A673 (cell line): ENCODE measurements at regions of chr17 and their contacts with region 1.

Region 1: DNA sequence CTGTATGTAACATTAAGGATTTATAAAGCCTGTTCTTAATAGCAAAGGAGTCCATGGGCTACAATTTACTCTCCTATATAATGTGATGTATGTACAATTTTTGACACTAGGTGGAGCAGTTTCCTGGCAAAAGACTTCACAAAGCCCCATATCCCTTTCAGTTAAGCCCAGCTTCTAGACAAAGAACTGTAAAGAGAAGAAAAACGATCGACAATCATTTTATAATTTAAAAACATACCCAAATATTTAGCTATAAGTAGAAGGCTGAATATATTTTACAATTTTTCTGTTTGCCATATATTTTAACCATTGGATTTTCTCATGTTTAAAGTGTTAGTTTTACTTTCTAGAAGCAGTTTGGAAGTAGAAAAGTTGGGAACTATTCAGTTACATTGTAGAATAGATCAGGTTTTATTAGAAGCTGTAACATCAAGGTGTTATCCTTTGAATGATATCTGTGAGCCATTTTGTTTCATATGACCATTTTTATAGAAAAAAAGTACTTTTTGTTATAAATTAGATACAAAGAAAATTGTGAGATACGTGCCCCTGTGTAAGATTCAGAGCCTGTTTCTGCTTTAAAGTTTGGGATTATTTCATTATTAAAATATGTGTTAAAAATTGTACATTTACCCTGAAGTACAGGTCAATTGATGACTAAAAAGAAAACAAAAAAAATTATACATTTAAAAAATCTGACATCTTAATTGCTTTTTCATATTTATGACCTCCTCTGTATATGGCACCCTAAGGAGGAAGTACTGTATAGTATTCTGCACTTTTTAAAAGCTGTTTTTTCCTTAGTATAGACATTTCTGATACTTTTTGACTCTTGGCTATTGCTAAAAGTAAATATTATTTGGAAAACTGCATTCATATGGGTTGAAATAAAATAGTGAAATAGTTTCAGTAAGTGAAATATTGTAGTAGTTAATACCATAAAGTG is 46.3 kb downstream of the VMP1 start:
- DNase-seq: peak; percentile 92
- H3K4me3 ChIP-seq: no peak overlapping the region
- H3K27ac ChIP-seq: peak overlapping the region; percentile 72
- H3K4me1 ChIP-seq: peaks cover 26% of the 10 kb centered on the region
- H3K27me3 ChIP-seq: no peaks in the 10 kb centered on the region
- CTCF ChIP-seq: peak; percentile 79

Region 2: GRCh38 chr17:59804901-59805465 is 51.2 kb after region 1 on chr17:
- CTCF ChIA-PET with region 1: no interaction called
- POLR2A ChIA-PET with region 1: no interaction called
- intact Hi-C with region 1: no loop called
- DNase-seq: peak; percentile 87
- H3K4me3 ChIP-seq: peak overlapping the region; percentile 39
- H3K27ac ChIP-seq: peak overlapping the region; percentile 87
- H3K4me1 ChIP-seq: peaks cover 34% of the 10 kb centered on the region
- H3K27me3 ChIP-seq: no peaks in the 10 kb centered on the region
- CTCF ChIP-seq: no peak

Region 3: GRCh38 chr17:59829217-59830006 is 75.6 kb after region 1 on chr17:
- CTCF ChIA-PET with region 1: interaction called, 10 read pairs
- POLR2A ChIA-PET with region 1: no interaction called
- intact Hi-C with region 1: no loop called
- DNase-seq: peak; percentile 99
- H3K4me3 ChIP-seq: peak overlapping the region; percentile 27
- H3K27ac ChIP-seq: peak overlapping the region; percentile 97
- H3K4me1 ChIP-seq: peaks cover 75% of the 10 kb centered on the region
- H3K27me3 ChIP-seq: no peaks in the 10 kb centered on the region
- CTCF ChIP-seq: no peak

Region 4: DNA sequence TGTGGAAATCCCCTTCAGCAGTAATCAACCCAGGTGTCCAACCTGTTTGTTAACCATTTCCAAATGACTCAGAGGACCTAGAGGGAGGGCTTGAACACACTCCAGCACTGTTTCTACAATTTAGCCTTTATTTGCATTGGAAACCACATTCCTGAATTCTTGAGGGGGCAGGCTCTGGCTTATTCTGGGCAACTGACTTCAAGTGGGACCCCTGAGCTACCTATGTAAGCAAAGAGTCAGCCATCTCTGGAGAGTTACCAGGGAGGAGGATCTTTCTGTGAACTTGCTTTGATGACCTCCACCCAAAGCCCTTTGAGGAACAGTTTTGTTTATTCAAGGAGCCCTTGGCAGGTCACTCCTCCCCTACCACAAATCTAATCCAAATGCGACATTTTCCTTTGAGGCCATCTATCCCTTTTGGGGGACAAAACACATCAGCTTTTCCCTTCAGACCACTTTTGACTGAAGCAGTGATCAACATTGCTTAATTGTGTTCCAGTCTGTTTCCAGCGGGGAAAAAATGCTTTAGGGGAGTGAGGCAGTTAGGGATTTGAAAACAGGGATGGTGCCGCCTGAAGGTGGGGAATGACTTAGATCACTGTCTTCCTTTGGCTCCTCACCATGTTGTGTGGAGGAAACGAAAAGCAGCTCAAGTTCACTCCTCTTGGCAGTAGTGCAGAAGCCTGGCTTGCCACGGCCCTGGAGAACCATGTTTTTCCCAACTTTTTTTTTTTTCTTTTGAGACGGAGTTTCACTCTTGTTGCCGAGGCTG is 92.8 kb after region 1 on chr17:
- CTCF ChIA-PET with region 1: interaction called, 4 read pairs
- POLR2A ChIA-PET with region 1: interaction called, 15 read pairs
- intact Hi-C with region 1: no loop called
- DNase-seq: no peak
- H3K4me3 ChIP-seq: no peak overlapping the region
- H3K27ac ChIP-seq: no peak overlapping the region
- H3K4me1 ChIP-seq: peaks cover 10% of the 10 kb centered on the region
- H3K27me3 ChIP-seq: no peaks in the 10 kb centered on the region
- CTCF ChIP-seq: no peak

Region 5: DNA sequence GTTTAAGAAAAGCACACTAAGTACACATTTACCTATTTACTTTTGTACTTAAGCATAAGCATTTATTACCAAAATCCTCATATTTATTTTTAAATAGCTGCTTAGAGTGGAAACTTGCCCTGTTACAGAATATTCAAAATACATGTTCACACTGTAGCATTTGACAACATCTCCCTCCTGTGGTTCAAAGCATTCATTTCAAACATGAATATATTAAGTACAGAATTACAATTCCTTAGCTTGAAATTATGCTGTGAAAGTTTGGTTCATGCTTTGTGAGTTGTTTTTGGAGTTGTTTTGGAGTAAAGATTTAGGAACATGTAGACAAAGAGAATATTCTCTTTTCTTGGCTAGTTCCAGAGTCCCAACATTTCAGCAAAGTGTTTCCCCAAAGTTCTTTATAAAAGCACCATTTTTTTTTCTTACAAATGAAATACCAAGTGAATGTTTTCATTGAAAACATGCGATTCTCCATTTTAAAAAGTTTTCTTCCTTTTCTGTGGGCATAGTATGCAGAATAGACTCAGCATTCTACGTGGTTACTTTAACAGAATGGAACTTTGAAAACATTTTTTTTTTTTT is 105.7 kb after region 1 on chr17:
- CTCF ChIA-PET with region 1: interaction called, 10 read pairs
- POLR2A ChIA-PET with region 1: interaction called, 6 read pairs
- intact Hi-C with region 1: loop called (anchors 2 kb)
- DNase-seq: peak; percentile 71
- H3K4me3 ChIP-seq: no peak overlapping the region
- H3K27ac ChIP-seq: no peak overlapping the region
- H3K4me1 ChIP-seq: peaks cover 5% of the 10 kb centered on the region
- H3K27me3 ChIP-seq: no peaks in the 10 kb centered on the region
- CTCF ChIP-seq: peak; percentile 71

Region 6: DNA sequence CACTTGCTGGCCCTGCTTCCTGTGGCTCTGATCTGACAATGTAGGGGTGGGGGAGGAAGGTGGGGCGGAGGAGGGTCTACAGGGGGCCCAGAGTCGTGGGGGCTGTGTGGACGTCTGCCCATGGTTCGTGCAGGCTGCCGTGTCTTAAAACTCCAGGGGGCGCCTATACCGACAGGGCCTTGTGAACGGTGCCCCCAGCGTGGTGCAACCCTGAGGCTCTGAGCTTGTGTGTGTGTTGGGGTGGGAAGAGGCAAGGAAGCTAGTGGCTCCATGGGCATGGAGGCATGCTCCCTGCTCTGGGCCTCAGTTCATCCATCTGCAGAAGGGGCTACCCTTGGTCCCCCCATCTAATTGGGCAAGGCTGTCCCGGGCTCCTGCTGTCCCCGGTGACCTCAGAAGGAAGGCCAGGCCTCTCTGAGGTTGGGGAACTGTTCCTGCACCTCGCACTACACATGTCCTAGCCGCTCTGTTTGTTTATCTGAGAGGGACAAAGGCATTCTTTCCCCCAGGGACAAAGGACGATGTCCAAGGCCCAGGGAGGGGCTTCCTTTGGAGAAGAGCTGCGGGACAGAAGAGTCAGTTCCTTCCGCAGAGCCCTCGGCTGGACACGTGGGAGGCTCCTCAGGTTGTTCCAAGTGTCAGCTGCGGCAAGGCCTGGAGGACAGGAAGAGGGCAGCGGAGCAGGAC is 409.4 kb after region 1 on chr17:
- CTCF ChIA-PET with region 1: no interaction called
- POLR2A ChIA-PET with region 1: interaction called, 18 read pairs
- intact Hi-C with region 1: no loop called
- DNase-seq: no peak
- H3K4me3 ChIP-seq: no peak overlapping the region
- H3K27ac ChIP-seq: no peak overlapping the region
- H3K4me1 ChIP-seq: no peaks in the 10 kb centered on the region
- H3K27me3 ChIP-seq: no peaks in the 10 kb centered on the region
- CTCF ChIP-seq: peak; percentile 46